Aorta (tissue), 5 donors: ENCODE measurements at regions of chr2 and their contacts with region 1.

Region 1: GRCh38 chr2:64586883-64587481 is 62.9 kb downstream of the AFTPH start:
- DNase-seq: no peak
- ATAC-seq: peak; percentile 68
- H3K4me3 ChIP-seq: no peak overlapping the region
- H3K27ac ChIP-seq: no peak overlapping the region
- H3K4me1 ChIP-seq: no peaks in the 10 kb centered on the region
- H3K27me3 ChIP-seq: no peaks in the 10 kb centered on the region

Region 2: GRCh38 chr2:64404002-64404731 is 182.8 kb before region 1 on chr2:
- intact Hi-C with region 1: no loop called
- DNase-seq: peak; percentile 89 to 91
- ATAC-seq: peak; percentile 88
- H3K4me3 ChIP-seq: no peak overlapping the region
- H3K27ac ChIP-seq: peak overlapping the region; percentile 51 to 85
- H3K4me1 ChIP-seq: peaks cover 0 to 6% of the 10 kb centered on the region in 2 donors
- H3K27me3 ChIP-seq: no peaks in the 10 kb centered on the region

Region 3: GRCh38 chr2:64644177-64645004 is 57.4 kb after region 1 on chr2:
- intact Hi-C with region 1: loop called (anchors 2 to 5 kb)
- DNase-seq: peak; percentile 89 to 92
- ATAC-seq: peak; percentile 91
- H3K4me3 ChIP-seq: peak overlapping the region in 1 of 2 donors; percentile 47
- H3K27ac ChIP-seq: peak overlapping the region in 1 of 2 donors; percentile 26
- H3K4me1 ChIP-seq: peaks cover 0 to 6% of the 10 kb centered on the region in 2 donors
- H3K27me3 ChIP-seq: no peaks in the 10 kb centered on the region

Region 4: GRCh38 chr2:64865073-64865830 is 278.3 kb after region 1 on chr2:
- intact Hi-C with region 1: loop called (anchors 5 kb)
- DNase-seq: peak; percentile 76 to 86
- ATAC-seq: peak; percentile 90
- H3K4me3 ChIP-seq: peak overlapping the region; percentile 86 to 92
- H3K27ac ChIP-seq: peak overlapping the region in 1 of 2 donors; percentile 62
- H3K4me1 ChIP-seq: no peaks in the 10 kb centered on the region
- H3K27me3 ChIP-seq: no peaks in the 10 kb centered on the region

Region 5: DNA sequence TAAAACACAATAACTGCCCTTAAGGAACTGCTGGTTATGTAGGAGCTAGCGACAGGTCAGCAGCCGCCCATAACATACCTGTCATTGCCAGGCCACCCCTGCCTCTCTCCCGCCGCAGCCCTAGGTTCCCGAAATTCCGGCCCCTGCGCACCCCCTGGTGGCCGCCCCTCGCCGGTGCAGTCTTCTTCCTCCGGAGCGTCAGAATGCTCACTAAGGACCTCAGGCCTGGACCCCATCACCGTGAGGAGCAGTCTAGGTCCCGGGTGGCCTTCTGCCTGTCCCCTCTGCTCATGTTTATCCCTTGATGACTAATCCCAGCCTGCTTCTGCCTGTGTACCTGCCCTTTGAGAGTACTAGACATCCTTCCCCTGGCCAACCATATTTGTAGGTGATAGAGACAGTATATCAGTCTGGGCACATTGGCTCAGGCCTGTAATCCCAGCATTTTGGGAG is 286.5 kb after region 1 on chr2:
- intact Hi-C with region 1: loop called (anchors 5 kb)
- DNase-seq: peak; percentile 82 to 95
- ATAC-seq: peak; percentile 85
- H3K4me3 ChIP-seq: no peak overlapping the region
- H3K27ac ChIP-seq: no peak overlapping the region
- H3K4me1 ChIP-seq: no peaks in the 10 kb centered on the region
- H3K27me3 ChIP-seq: no peaks in the 10 kb centered on the region